ENCODE measurements at regions of chr16 and their contacts with region 1.

Region 1: GRCh38 chr16:1677802-1678496 is at the start of gene JPT2:
- DNase-seq: peak; percentile 99
- H3K4me3 Mint-ChIP-seq: peak within 1 kb of the TSS; percentile 89
- H3K27ac Mint-ChIP-seq: peak within 1 kb of the TSS; percentile 92
- H3K4me1 Mint-ChIP-seq: peaks cover 34% of the 10 kb centered on the region
- H3K27me3 Mint-ChIP-seq: no peaks in the 10 kb centered on the region
- CTCF ChIP-seq: no peak
- total RNA-seq, gene JPT2: 167 and 185 TPM in 2 replicates

Region 2: DNA sequence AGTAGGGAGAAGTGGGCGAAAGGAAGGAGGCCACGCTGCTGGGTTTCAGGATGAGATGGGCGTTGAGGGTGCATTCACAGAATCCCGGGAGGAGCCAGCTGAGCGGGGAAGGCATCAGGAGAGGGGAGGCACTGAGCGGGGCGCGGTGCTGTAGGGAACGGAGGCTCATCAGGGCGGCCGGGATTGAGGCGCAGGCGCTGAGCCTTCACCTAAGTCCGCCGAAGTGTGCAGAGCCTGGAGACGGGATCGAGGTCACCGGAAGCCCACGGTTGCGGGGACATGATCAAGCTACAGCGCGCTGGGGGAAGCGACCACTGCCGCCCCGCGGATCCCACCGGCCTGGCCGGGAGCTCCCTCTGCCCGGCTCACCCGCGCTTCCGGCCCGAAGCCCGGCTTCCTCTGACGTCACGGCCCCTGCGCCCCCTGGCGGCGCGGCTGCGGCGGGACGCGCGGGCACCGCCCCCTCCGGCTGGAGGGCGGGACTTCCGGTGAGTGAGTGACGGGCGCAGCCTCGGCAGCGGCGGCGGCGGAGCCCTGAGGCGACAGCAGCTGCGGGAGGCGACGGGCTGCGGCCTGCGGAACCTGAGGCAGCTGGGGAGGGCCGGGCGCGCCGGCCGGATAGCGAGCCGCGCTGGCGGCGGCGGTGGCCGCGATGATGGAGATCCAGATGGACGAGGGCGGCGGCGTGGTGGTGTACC is 27.9 kb after region 1 on chr16 and contains the start of gene MAPK8IP3:
- CTCF ChIA-PET with region 1: interaction called, 20 read pairs
- intact Hi-C with region 1: no loop called
- DNase-seq: peak; percentile 98
- H3K4me3 Mint-ChIP-seq: peak within 1 kb of the TSS; percentile 90
- H3K27ac Mint-ChIP-seq: peak within 1 kb of the TSS; percentile 97
- H3K4me1 Mint-ChIP-seq: peaks cover 10% of the 10 kb centered on the region
- H3K27me3 Mint-ChIP-seq: no peaks in the 10 kb centered on the region
- CTCF ChIP-seq: peak; percentile 98
- total RNA-seq, gene MAPK8IP3: 104 and 110 TPM in 2 replicates